ENCODE measurements at regions of chr7 and their contacts with region 1.

Region 1: GRCh38 chr7:29921404-29922010 is 68.1 kb downstream of the SCRN1 start:
- DNase-seq: no peak
- ATAC-seq: peak; percentile 87 to 95 (median 88)
- H3K4me3 ChIP-seq: no peak overlapping the region
- H3K27ac ChIP-seq: no peak overlapping the region
- H3K4me1 ChIP-seq: no peaks in the 10 kb centered on the region
- H3K27me3 ChIP-seq: no peaks in the 10 kb centered on the region
- CTCF ChIP-seq: peak; percentile 89

Region 2: GRCh38 chr7:29639881-29640595 is 281.5 kb before region 1 on chr7:
- intact Hi-C with region 1: loop called in 1 of 2 experiments (anchors 5 kb)
- DNase-seq: no peak
- ATAC-seq: no peak
- H3K4me3 ChIP-seq: no peak overlapping the region
- H3K27ac ChIP-seq: no peak overlapping the region
- H3K4me1 ChIP-seq: no peaks in the 10 kb centered on the region
- H3K27me3 ChIP-seq: no peaks in the 10 kb centered on the region
- CTCF ChIP-seq: no peak